Activated B cell treated with CpG ODN at 0.5 μM for 24 hours (primary cell): ENCODE measurements at regions of chr3 and their contacts with region 1.

Region 1: GRCh38 chr3:27659279-27660021 is 62.7 kb downstream of the EOMES start:
- DNase-seq: no peak
- ATAC-seq: peak; percentile 65
- H3K4me3 Mint-ChIP-seq: no peak overlapping the region
- H3K27ac Mint-ChIP-seq: no peak overlapping the region
- H3K4me1 Mint-ChIP-seq: peaks cover 7% of the 10 kb centered on the region
- H3K27me3 Mint-ChIP-seq: no peaks in the 10 kb centered on the region
- CTCF ChIP-seq: peak; percentile 33

Region 2: GRCh38 chr3:27312044-27312668 is 347.3 kb before region 1 on chr3:
- CTCF ChIA-PET with region 1: no interaction called
- POLR2A ChIA-PET with region 1: no interaction called
- intact Hi-C with region 1: loop called (anchors 1 kb)
- DNase-seq: no peak
- ATAC-seq: peak; percentile 70
- H3K4me3 Mint-ChIP-seq: no peak overlapping the region
- H3K27ac Mint-ChIP-seq: no peak overlapping the region
- H3K4me1 Mint-ChIP-seq: no peaks in the 10 kb centered on the region
- H3K27me3 Mint-ChIP-seq: no peaks in the 10 kb centered on the region
- CTCF ChIP-seq: peak; percentile 35

Region 3: DNA sequence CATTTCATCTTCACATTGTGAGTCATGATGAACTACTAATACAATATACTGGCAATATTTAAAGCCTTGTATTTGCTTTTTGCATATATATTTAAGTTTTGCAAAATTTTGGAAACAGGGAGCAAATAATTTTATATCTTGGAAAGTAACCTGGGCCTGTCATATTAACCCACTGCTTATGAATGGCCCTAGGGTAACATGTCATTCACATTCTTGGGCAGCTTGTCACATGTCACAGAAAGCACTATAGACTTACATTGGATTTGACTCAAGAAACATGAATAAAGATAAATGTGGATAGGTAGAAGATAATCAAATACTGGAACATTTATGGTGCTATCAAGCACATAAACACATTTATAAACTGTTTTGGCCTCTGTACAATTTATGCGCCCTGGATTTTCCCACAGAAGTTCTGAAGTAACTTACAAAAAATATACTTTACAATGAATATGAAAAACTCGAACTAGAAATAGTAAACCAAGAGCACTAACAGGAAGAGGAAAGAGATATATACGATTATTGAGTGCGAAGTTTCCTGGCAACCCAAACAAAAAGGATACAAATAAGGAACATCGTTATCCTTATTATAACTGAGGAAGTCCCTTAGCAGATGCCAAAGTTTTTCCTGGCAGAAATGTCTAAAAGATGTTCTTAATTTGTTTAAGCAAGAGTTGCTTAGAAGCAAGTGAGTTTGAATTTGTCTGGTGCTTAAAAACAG is 1878.6 kb after region 1 on chr3:
- CTCF ChIA-PET with region 1: no interaction called
- POLR2A ChIA-PET with region 1: no interaction called
- intact Hi-C with region 1: no loop called
- DNase-seq: no peak
- ATAC-seq: no peak
- H3K4me3 Mint-ChIP-seq: no peak overlapping the region
- H3K27ac Mint-ChIP-seq: no peak overlapping the region
- H3K4me1 Mint-ChIP-seq: no peaks in the 10 kb centered on the region
- H3K27me3 Mint-ChIP-seq: no peaks in the 10 kb centered on the region
- CTCF ChIP-seq: no peak